Left ventricle myocardium inferior (tissue), 1 donor: ENCODE measurements at regions of chr22 and their contacts with region 1.

Region 1: DNA sequence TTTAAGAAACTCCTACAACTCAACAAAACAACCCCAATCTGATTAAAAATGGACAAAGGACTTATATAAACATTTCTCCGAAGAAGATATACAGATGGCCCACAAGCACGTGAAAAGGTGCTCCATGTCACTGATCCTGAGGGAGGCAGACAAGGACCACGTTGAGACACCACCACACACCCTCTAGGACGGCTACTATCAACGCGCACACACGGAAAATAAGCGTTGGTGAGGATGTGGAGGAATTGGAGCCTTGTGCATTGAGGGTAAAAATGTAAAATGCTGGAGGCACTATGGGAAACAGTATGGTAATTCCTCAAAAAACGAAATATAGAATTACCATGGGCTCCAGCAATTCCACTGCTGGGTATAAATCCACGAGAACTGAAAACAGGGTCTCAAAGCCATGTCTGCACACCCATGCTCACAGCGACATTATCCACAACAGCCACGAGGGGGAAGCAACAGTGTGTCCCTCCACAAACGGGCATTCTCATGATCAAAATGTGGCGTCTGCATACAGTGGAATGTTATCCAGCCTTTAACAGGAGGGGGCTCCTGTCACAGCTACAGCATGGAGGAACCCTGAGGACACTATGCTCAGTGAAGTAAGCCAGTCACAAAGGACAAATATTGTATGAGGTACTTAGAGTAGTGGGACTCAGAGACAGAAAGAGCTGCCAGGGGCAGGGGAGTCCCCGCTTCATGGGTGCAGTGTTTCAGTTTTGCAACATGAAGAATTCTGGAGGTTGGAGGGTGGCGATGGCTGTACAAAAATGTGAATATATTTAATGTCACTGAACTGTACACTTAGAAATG is 22.5 kb downstream of the YPEL1 start:
- DNase-seq: peak; percentile 60
- H3K4me3 ChIP-seq: peak overlapping the region; percentile 31
- H3K27ac ChIP-seq: no peak overlapping the region
- H3K4me1 ChIP-seq: peaks cover 24% of the 10 kb centered on the region
- H3K27me3 ChIP-seq: no peaks in the 10 kb centered on the region
- CTCF ChIP-seq: peak; percentile 85

Region 2: GRCh38 chr22:21641789-21642583 is 71.1 kb before region 1 on chr22 and contains the start of gene SDF2L1:
- intact Hi-C with region 1: no loop called
- DNase-seq: peak; percentile 98
- H3K4me3 ChIP-seq: peak within 1 kb of the TSS; percentile 92
- H3K27ac ChIP-seq: peak within 1 kb of the TSS; percentile 80
- H3K4me1 ChIP-seq: peaks cover 31% of the 10 kb centered on the region
- H3K27me3 ChIP-seq: no peaks in the 10 kb centered on the region
- CTCF ChIP-seq: peak; percentile 41
- total RNA-seq, gene SDF2L1: 18.3 TPM

Region 3: DNA sequence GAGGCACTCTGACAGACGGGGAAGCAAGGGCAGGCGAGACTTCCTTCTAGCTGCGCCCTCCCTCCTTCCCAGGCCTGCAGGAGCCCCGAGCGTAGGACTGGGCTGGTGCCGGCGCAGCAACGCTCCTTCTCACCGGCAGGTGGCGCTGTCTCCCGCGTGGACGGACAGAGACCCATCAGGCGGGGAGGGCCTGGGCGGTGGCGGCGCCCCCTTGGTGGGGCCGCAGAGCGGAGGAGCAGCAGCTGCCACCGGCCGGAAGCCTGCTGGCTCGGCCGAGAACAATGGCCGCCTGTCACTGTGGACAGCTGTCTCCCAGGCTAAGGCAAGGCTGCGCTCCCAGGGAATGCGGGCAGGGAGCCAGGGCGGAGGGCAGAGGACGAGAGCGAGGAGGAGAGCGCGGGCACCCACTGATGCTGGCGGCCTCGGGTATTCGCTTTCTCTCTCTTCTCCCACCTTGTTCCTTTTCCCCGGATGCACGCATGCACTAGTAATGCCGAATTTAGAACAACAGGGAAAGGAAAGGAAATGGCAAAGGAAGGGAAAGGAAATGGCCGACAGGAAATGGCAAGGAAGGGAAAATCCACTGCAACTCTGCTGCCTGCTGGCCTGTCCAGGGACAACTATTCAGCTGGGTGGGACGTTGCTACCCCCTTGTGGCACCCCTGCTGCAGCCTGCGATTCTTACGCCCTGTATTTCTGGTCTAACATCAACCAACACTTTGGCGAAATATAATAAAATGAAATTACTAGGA is 225.1 kb after region 1 on chr22:
- intact Hi-C with region 1: loop called (anchors 5 kb)
- DNase-seq: peak; percentile 95
- H3K4me3 ChIP-seq: peak overlapping the region; percentile 70
- H3K27ac ChIP-seq: peak overlapping the region; percentile 98
- H3K4me1 ChIP-seq: peaks cover 77% of the 10 kb centered on the region
- H3K27me3 ChIP-seq: no peaks in the 10 kb centered on the region
- CTCF ChIP-seq: peak; percentile 91